ENCODE measurements at regions of chr19 and their contacts with region 1.

Region 1: DNA sequence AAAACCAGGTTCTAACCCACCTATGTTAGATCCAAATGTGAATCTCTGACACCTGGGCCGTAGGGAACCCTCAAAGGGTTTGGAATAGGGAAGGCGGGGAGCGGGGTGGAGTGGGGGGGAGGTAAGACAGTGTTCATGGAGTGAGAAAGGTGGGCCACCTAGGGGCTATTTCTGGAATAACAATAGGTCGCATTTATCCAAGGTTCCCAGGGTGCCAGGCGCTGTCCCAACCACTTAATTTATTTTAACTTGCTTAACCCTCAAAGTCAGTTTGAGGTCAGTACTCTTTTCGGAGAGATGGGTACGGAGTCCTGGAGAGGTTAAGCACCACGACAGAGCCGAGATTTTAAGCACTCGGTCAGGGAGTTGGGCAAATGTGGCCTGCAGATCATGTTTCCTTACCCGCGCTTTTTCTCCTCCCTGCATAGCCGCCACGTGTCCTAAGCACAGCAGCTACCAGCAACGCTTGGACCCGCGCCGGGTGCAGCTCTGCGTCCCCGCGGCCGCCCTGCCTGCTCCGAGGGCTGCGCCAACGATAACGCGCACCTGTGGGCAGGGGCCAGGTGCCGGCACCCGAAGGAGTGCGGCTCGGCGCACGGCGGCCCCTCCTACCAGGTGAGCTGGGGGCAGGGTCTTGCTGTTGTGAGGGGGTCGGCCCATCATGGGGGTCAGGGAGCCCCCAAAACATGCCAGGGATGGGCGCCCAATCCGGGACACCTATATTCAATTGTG is 25.0 kb upstream of the FXYD3 start:
- DNase-seq: peak; percentile 62 to 73 (median 68)
- H3K4me3 ChIP-seq: peak overlapping the region in 1 of 7 experiments; percentile 17
- H3K27ac ChIP-seq: no peak overlapping the region
- H3K4me1 ChIP-seq: peaks cover 0 to 11% (median 8%) of the 10 kb centered on the region in 4 experiments
- H3K27me3 ChIP-seq: peaks cover 0 to 2% (median 0%) of the 10 kb centered on the region in 5 experiments

Region 2: GRCh38 chr19:35114353-35115176 is 23.9 kb after region 1 on chr19:
- CTCF ChIA-PET with region 1: interaction called, 11 read pairs
- POLR2A ChIA-PET with region 1: no interaction called
- DNase-seq: peak; percentile 82 to 88 (median 83)
- H3K4me3 ChIP-seq: peak overlapping the region in 6 of 7 experiments; percentile 36 to 73 (median 54)
- H3K27ac ChIP-seq: no peak overlapping the region
- H3K4me1 ChIP-seq: peaks cover 1 to 59% (median 32%) of the 10 kb centered on the region in 4 experiments
- H3K27me3 ChIP-seq: no peaks in the 10 kb centered on the region